ENCODE measurements at regions of chr18 and their contacts with region 1.

Region 1: DNA sequence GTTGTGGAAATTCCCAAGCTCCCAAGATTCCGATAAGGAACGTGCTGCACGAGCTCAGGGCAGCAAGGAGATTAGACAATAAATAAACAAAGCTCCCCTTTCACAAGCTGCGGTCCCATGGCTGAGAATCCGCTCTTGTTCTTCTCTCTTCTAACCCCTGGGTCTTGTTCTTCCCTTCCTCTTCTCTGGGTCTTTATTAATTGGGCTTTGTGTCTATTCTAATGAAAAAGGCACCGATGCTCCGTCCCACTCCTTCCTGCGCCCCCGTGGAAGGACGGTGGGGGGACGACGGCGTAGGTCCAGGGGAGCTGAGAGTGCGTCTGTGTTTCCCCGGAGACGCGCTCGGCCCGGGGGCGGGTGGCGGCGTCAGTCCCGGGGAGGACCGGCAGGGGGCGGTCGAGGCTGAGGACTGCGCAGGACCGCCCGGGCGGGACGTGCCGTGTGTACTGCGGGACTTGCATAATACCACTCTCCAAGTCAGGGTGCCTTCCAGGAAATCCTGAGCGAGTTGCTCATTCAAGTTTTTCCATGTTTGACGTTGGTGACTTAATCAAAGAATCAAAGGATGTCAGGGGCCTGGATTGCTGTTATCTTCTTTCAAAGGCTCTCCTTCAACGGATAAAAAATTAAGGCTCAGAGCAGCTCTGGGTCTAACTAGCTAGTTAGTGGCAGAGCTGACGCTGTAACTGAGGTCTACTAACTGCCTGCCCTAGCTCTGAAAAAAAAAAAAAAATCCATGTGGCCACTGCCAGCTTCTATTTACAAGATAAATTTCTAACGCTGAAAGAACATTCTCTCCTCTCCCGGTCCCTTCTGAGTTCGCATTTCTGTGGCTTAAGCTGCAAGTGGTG is 321.4 kb downstream of the TGIF1 start:
- DNase-seq: peak; percentile 81 to 86
- ATAC-seq: peak; percentile 98 to 100 (median 100)
- H3K4me3 ChIP-seq: peak overlapping the region in 9 of 10 donors; percentile 0 to 52 (median 47)
- H3K27ac ChIP-seq: peak overlapping the region in 6 of 10 donors; percentile 51 to 76 (median 70)
- H3K4me1 ChIP-seq: peaks cover 0 to 24% (median 11%) of the 10 kb centered on the region in 9 donors
- H3K27me3 ChIP-seq: peaks cover 0 to 11% (median 0%) of the 10 kb centered on the region in 7 donors
- CTCF ChIP-seq: peak; percentile 95 to 98 (median 97)

Region 2: GRCh38 chr18:3703732-3704176 is 67.6 kb before region 1 on chr18:
- intact Hi-C with region 1: loop called in 4 of 10 experiments (anchors 5 to 10 kb)
- DNase-seq: peak; percentile 44 to 64
- ATAC-seq: peak; percentile 53 to 91 (median 79)
- H3K4me3 ChIP-seq: peak overlapping the region in 4 of 10 donors; percentile 3 to 26 (median 18)
- H3K27ac ChIP-seq: peak overlapping the region in 4 of 10 donors; percentile 32 to 60 (median 42)
- H3K4me1 ChIP-seq: peaks cover 0 to 25% (median 12%) of the 10 kb centered on the region in 9 donors
- H3K27me3 ChIP-seq: no peaks in the 10 kb centered on the region
- CTCF ChIP-seq: peak; percentile 33 to 76 (median 66)

Region 3: GRCh38 chr18:3710712-3711269 is 60.6 kb before region 1 on chr18:
- intact Hi-C with region 1: loop called in 5 of 10 experiments (anchors 10 kb)
- DNase-seq: peak in 1 of 2 donors; percentile 35
- ATAC-seq: peak; percentile 47 to 81 (median 76)
- H3K4me3 ChIP-seq: no peak overlapping the region
- H3K27ac ChIP-seq: peak overlapping the region in 1 of 10 donors; percentile 47
- H3K4me1 ChIP-seq: peaks cover 0 to 18% (median 0%) of the 10 kb centered on the region in 9 donors
- H3K27me3 ChIP-seq: peaks cover 0 to 3% (median 0%) of the 10 kb centered on the region in 7 donors
- CTCF ChIP-seq: no peak

Region 4: DNA sequence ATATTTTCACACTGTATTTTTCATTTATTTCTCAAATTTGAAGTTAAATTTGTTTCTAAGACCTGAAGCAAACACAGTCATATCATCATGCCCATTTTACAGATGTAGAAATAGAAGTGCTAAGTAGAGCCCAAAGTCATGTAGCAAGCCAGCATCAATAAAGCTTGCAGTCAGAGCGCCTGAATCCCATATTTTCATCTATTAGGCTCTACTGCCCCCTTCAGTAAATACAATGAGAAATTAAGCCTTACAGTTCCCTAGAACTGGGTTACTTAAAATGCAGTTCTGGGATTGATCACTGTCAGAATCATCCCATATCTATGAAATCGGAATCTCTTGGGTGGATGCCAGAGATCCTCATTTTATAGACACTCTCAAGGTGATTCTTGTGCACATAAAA is 98.5 kb after region 1 on chr18:
- intact Hi-C with region 1: loop called in 8 of 10 experiments (anchors 1 to 10 kb)
- DNase-seq: no peak
- ATAC-seq: peak in 5 of 8 donors; percentile 33 to 79 (median 61)
- H3K4me3 ChIP-seq: no peak overlapping the region
- H3K27ac ChIP-seq: no peak overlapping the region
- H3K4me1 ChIP-seq: peaks cover 0 to 26% (median 4%) of the 10 kb centered on the region in 9 donors
- H3K27me3 ChIP-seq: no peaks in the 10 kb centered on the region
- CTCF ChIP-seq: peak; percentile 11 to 64 (median 49)

Region 5: DNA sequence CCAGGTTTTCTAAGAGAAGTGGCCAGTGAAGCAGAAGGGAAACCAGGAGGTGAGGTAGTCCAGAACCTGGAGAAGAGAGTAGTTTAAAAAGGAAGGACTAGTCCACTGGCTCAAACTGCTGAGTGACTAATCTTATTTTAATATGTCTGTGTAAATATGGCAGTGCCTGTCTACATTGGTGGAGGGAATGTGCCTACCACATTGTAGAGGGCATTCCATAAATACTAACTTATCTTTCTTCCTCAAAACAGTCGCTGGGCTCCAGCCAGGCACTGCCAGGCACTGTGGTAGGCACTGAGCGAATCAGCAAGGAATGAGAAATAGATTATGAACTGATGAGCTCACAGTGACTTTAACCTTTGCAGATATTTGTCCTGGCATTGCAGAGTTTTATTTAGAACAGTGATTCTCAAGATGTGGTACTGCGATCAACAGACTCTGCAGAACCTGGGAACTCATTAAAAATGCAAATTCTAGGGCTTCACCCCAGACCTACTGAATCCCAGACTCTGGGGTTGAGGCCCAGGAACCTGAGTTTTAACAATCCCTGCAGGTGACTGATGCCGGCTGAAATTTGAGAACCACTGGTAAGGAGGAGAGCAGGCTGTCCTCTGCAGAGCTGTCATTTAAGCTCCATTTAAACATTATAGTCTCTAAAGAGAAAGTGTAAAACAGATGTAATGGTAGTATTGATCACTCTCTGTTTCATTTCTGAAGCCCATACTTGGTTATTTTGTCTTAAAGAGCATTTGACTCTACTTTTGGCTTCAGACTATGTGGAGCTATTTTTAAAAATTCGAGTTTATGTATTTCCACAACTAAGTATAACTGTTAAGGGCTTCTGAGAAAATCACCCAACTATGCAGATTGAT is 195.9 kb after region 1 on chr18:
- intact Hi-C with region 1: loop called in 2 of 10 experiments (anchors 5 to 10 kb)
- DNase-seq: peak in 1 of 2 donors; percentile 53
- ATAC-seq: peak; percentile 72 to 97 (median 92)
- H3K4me3 ChIP-seq: no peak overlapping the region
- H3K27ac ChIP-seq: peak overlapping the region in 7 of 10 donors; percentile 28 to 84 (median 72)
- H3K4me1 ChIP-seq: peaks cover 0 to 29% (median 4%) of the 10 kb centered on the region in 9 donors
- H3K27me3 ChIP-seq: no peaks in the 10 kb centered on the region
- CTCF ChIP-seq: peak in 1 of 9 donors; percentile 5

Region 6: DNA sequence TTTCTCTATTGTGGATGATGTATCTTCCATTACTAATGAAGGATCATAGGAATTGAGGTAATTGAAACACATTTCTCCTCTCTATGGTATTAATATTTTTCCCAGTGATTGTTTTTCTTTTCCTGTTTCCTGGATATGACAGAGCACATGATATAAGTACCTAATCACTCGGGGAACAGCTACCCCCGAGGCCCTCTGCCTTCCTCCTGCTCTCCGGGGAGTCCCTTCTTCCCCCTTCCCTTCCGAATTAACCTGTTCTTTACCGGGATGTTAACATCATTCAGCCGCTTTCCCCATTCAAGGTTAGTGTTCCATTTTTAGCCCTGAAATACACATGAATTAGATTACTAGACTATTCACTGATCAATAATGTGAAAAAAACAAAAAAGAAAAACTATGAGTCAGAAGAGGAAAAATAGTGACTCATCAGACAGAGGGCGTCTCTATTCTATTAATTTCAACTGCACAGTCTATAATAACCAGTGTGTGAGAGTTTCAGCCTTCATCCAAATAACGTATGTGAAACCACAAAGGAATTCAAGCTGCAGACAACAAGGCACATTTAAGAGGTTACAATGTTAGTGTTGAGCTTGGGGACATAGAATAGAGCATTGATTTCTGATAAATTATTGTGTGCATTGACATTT is 233.0 kb after region 1 on chr18:
- intact Hi-C with region 1: loop called in 5 of 10 experiments (anchors 2 to 5 kb)
- DNase-seq: no peak
- ATAC-seq: no peak
- H3K4me3 ChIP-seq: no peak overlapping the region
- H3K27ac ChIP-seq: no peak overlapping the region
- H3K4me1 ChIP-seq: peaks cover 0 to 11% (median 0%) of the 10 kb centered on the region in 9 donors
- H3K27me3 ChIP-seq: no peaks in the 10 kb centered on the region
- CTCF ChIP-seq: no peak

Region 7: GRCh38 chr18:4068552-4069158 is 297.3 kb after region 1 on chr18:
- intact Hi-C with region 1: loop called in 6 of 10 experiments (anchors 2 to 10 kb)
- DNase-seq: peak in 1 of 2 donors; percentile 31
- ATAC-seq: peak in 1 of 8 donors; percentile 39
- H3K4me3 ChIP-seq: no peak overlapping the region
- H3K27ac ChIP-seq: no peak overlapping the region
- H3K4me1 ChIP-seq: no peaks in the 10 kb centered on the region
- H3K27me3 ChIP-seq: no peaks in the 10 kb centered on the region
- CTCF ChIP-seq: peak; percentile 42 to 83 (median 75)